ENCODE measurements at regions of chr1 and their contacts with region 1.

Region 1: GRCh38 chr1:179969962-179970361 is 15.4 kb downstream of the CEP350 start:
- DNase-seq: no peak
- ATAC-seq: no peak
- H3K4me3 ChIP-seq: no peak overlapping the region
- H3K4me3 Mint-ChIP-seq: peak overlapping the region in 7 of 10 donors; percentile 24 to 64 (median 48)
- H3K27ac ChIP-seq: no peak overlapping the region
- H3K27ac Mint-ChIP-seq: peak overlapping the region in 3 of 9 donors; percentile 3 to 38 (median 19)
- H3K4me1 ChIP-seq: peaks cover 11 to 21% of the 10 kb centered on the region in 2 donors
- H3K4me1 Mint-ChIP-seq: peaks cover 34 to 72% (median 67%) of the 10 kb centered on the region in 7 donors
- H3K27me3 ChIP-seq: no peaks in the 10 kb centered on the region
- H3K27me3 Mint-ChIP-seq: no peaks in the 10 kb centered on the region

Region 2: GRCh38 chr1:179921981-179922872 is 47.7 kb before region 1 on chr1:
- CTCF ChIA-PET with region 1: no interaction called
- POLR2A ChIA-PET with region 1: no interaction called
- intact Hi-C with region 1: no loop called
- DNase-seq: no peak
- ATAC-seq: no peak
- H3K4me3 ChIP-seq: no peak overlapping the region
- H3K4me3 Mint-ChIP-seq: no peak overlapping the region
- H3K27ac ChIP-seq: no peak overlapping the region
- H3K27ac Mint-ChIP-seq: peak overlapping the region in 5 of 9 donors; percentile 8 to 77 (median 38)
- H3K4me1 ChIP-seq: no peaks in the 10 kb centered on the region
- H3K4me1 Mint-ChIP-seq: peaks cover 0 to 7% (median 2%) of the 10 kb centered on the region in 7 donors
- H3K27me3 ChIP-seq: no peaks in the 10 kb centered on the region
- H3K27me3 Mint-ChIP-seq: no peaks in the 10 kb centered on the region

Region 3: DNA sequence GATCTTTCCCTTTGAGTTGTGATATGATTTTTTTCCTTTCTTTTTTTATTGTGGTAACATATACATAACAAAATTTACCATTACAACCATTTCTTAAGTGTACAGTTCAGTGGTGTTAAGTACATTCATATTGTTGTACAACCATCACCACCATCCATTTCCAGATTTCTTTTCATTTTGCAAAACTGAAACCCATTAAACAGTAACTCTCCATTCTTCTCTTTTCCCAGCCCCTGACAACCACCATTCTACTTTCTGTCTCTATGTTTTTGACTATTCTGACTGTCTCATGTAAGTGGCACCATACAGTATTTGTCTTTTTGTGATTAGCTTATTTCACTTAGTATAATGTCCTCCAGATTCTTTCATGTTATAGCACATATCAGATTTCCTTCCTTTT is 15.0 kb after region 1 on chr1:
- CTCF ChIA-PET with region 1: interaction called, 4 read pairs
- POLR2A ChIA-PET with region 1: no interaction called
- intact Hi-C with region 1: loop called in 1 of 2 experiments (anchors 2 kb)
- DNase-seq: no peak
- ATAC-seq: no peak
- H3K4me3 ChIP-seq: no peak overlapping the region
- H3K4me3 Mint-ChIP-seq: no peak overlapping the region
- H3K27ac ChIP-seq: no peak overlapping the region
- H3K27ac Mint-ChIP-seq: peak overlapping the region in 6 of 9 donors; percentile 6 to 43 (median 20)
- H3K4me1 ChIP-seq: no peaks in the 10 kb centered on the region
- H3K4me1 Mint-ChIP-seq: peaks cover 13 to 39% (median 33%) of the 10 kb centered on the region in 7 donors
- H3K27me3 ChIP-seq: no peaks in the 10 kb centered on the region
- H3K27me3 Mint-ChIP-seq: no peaks in the 10 kb centered on the region

Region 4: GRCh38 chr1:180070286-180070685 is 100.3 kb after region 1 on chr1:
- CTCF ChIA-PET with region 1: no interaction called
- POLR2A ChIA-PET with region 1: no interaction called
- intact Hi-C with region 1: no loop called
- DNase-seq: no peak
- ATAC-seq: no peak
- H3K4me3 ChIP-seq: no peak overlapping the region
- H3K4me3 Mint-ChIP-seq: no peak overlapping the region
- H3K27ac ChIP-seq: no peak overlapping the region
- H3K27ac Mint-ChIP-seq: no peak overlapping the region
- H3K4me1 ChIP-seq: no peaks in the 10 kb centered on the region
- H3K4me1 Mint-ChIP-seq: no peaks in the 10 kb centered on the region
- H3K27me3 ChIP-seq: no peaks in the 10 kb centered on the region
- H3K27me3 Mint-ChIP-seq: no peaks in the 10 kb centered on the region

Measured in naive thymus-derived CD4-positive, alpha-beta T cell (primary cell).